Common myeloid progenitor, CD34-positive (primary cell): ENCODE measurements at regions of chr12 and their contacts with region 1.

Region 1: DNA sequence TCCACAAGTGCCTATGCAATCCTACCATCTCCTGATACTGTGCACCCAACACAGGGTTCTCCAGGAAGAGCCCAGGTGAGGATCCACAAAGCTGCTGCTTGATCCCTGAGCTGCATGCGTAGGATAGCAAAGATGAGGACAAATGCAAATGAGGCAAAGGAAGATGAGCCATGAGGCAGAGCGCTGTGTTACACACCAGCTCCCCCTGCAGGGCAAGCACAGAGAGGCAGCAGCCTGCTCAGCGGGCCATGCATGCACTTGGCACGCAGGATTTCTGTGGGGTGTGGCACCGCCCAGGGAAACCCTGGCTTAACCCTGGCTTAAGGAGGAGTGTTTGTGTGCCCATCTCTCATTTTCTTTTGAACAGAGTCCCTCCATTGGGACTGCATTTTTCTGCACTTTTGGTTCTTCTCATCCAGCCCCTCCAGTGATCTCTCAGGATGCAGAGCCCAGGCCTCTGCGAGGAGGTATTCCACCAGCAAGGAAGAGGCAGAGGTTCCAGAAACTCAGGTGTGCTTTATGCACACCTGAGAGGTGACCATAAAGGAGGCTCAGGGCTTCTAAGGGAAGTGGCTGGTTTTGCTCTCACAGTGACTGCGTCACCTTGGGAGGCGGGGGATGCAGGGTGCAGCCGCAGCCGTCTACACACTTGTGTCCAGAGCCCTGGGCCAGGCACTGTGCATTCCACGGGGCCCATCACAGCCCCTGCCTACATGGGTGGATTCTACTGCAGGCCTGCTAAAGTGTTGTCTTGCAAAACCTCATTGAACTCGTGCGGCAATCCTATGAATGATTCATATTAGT is 973.3 kb upstream of the TMEM132C start:
- DNase-seq: peak; percentile 12 to 46 (median 42)
- H3K4me3 ChIP-seq: no peak overlapping the region
- H3K27ac ChIP-seq: no peak overlapping the region
- H3K4me1 ChIP-seq: no peaks in the 10 kb centered on the region
- H3K27me3 ChIP-seq: no peaks in the 10 kb centered on the region

Region 2: GRCh38 chr12:127280393-127281275 is 13.1 kb before region 1 on chr12:
- CTCF ChIA-PET with region 1: interaction called, 32 read pairs
- POLR2A ChIA-PET with region 1: no interaction called
- DNase-seq: peak; percentile 48 to 69 (median 59)
- H3K4me3 ChIP-seq: no peak overlapping the region
- H3K27ac ChIP-seq: no peak overlapping the region
- H3K4me1 ChIP-seq: peaks cover 0 to 2% (median 0%) of the 10 kb centered on the region in 4 experiments
- H3K27me3 ChIP-seq: peaks cover 0 to 5% (median 0%) of the 10 kb centered on the region in 5 experiments

Region 3: GRCh38 chr12:127306604-127307215 is 13.0 kb after region 1 on chr12:
- CTCF ChIA-PET with region 1: no interaction called
- POLR2A ChIA-PET with region 1: no interaction called
- DNase-seq: no peak
- H3K4me3 ChIP-seq: no peak overlapping the region
- H3K27ac ChIP-seq: no peak overlapping the region
- H3K4me1 ChIP-seq: no peaks in the 10 kb centered on the region
- H3K27me3 ChIP-seq: no peaks in the 10 kb centered on the region